AG04450 (cell line): ENCODE measurements at regions of chr15 and their contacts with region 1.

Region 1: DNA sequence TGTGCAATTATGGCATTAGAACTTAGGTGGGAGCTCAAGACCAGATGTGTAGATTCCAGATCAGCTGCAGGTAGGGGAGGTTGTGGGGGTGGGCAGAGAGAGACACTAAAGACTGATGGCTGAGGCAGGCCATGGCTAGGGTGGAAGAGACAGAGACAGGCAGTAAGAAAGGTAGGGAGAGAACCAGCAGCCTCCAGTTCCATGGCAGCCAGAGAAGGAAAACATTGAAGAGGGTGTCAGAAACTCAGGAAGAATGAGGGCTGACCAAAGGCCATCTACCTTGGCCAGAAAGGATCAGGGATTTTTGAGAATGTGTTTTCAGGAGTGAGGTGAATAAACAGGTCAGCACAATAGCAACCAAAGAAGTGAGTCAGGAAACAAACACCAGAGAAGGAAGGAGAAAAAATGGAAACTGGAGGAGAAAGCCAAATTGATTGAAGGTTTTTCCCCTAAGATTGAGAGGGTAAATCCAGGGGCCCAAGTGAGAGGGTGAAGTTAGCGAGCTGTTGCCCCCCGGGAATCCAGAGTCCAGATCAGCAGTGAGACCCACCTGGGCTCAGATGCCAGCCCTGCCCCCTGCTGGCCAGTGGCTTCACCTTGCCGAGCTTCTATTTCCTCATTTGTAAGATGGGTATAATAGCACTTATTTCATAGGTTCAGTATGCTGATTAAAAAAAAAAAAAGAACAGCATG is 41.0 kb downstream of the ABHD2 start:
- DNase-seq: no peak
- H3K4me3 ChIP-seq: no peak overlapping the region
- H3K27ac ChIP-seq: no peak overlapping the region
- H3K27me3 ChIP-seq: no peaks in the 10 kb centered on the region
- CTCF ChIP-seq: peak; percentile 73

Region 2: GRCh38 chr15:88476635-88477060 is 652.6 kb before region 1 on chr15:
- CTCF ChIA-PET with region 1: no interaction called
- POLR2A ChIA-PET with region 1: no interaction called
- DNase-seq: peak; percentile 23
- H3K4me3 ChIP-seq: no peak overlapping the region
- H3K27ac ChIP-seq: no peak overlapping the region
- H3K27me3 ChIP-seq: no peaks in the 10 kb centered on the region
- CTCF ChIP-seq: peak; percentile 66

Region 3: DNA sequence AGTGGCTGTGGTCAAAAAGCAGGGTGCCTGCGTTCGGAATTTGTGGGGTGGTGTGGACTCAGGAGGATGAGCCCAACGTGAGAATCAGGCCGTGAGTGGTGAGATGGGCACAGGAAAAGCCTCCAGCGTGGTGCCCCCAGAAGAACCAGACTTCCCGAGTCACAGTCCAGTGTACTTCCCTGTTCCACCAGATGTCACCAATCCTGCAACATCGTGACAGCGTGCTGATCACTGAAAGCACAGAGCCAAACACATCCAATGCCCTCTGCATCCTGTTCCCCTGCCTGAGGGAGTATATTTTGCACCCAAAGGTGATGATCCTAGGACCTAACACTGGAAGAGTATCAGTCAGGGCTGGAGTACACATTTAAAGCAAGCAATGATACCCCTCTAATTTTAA is 346.8 kb before region 1 on chr15:
- CTCF ChIA-PET with region 1: no interaction called
- POLR2A ChIA-PET with region 1: no interaction called
- DNase-seq: no peak
- H3K4me3 ChIP-seq: no peak overlapping the region
- H3K27ac ChIP-seq: no peak overlapping the region
- H3K27me3 ChIP-seq: peaks cover 7% of the 10 kb centered on the region
- CTCF ChIP-seq: no peak

Region 4: GRCh38 chr15:89030311-89030710 is 99.0 kb before region 1 on chr15:
- CTCF ChIA-PET with region 1: no interaction called
- POLR2A ChIA-PET with region 1: no interaction called
- DNase-seq: no peak
- H3K4me3 ChIP-seq: no peak overlapping the region
- H3K27ac ChIP-seq: no peak overlapping the region
- H3K27me3 ChIP-seq: no peaks in the 10 kb centered on the region
- CTCF ChIP-seq: no peak

Region 5: GRCh38 chr15:89101302-89102191 is 27.7 kb before region 1 on chr15:
- CTCF ChIA-PET with region 1: interaction called, 26 read pairs
- POLR2A ChIA-PET with region 1: no interaction called
- DNase-seq: peak; percentile 97
- H3K4me3 ChIP-seq: no peak overlapping the region
- H3K27ac ChIP-seq: peak overlapping the region; percentile 97
- H3K27me3 ChIP-seq: no peaks in the 10 kb centered on the region
- CTCF ChIP-seq: no peak

Region 6: DNA sequence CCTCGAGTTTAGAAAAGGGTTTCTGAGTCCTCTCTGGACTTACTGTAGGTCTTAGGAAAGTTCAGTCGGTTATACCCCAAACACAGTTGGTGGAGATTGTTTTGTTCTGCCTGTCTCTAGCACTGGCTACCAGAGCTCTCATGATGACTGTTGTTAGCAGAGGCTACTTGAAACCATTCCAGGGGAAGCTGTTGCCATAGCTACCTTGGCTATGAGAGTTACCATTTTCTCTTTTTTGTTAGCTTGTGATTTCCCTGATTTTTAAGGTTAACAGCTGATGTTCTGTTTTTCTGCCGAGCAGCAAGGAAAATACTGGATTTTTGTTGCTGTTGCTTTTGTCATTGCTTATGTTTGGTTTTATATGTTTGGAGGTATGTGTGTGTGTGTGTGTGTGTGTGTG is 14.3 kb before region 1 on chr15:
- CTCF ChIA-PET with region 1: interaction called, 17 read pairs
- POLR2A ChIA-PET with region 1: no interaction called
- DNase-seq: peak; percentile 38
- H3K4me3 ChIP-seq: no peak overlapping the region
- H3K27ac ChIP-seq: no peak overlapping the region
- H3K27me3 ChIP-seq: no peaks in the 10 kb centered on the region
- CTCF ChIP-seq: no peak

Region 7: DNA sequence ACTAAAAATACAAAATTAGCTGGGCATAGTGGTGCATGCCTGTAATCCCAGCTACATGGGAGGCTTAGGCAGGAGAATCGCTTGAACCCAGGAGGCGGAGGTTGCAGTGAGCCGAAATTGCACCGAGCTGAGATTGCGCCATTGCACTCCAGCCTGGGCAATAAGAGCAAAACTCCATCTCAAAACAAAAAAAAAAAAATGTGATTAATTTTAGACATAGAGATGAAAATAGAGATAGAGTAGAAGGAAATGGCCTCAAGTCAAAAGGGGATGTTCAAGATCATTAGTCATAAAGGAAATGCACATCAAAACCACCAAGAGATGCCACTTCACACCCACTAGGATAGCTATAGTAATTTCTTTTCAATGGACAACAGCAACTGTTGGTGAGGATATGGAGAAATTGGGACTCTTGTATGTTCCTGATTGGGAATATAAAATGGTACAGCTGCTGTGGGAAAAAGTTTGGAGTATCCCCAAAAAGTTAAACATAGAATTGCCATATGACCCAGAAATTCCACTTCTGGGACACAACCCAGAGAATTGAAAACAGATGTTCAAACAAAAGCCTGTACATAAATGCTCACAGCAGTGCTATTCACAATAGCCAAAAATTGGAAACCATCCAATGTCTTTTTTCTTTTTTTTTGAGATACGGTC is 14.4 kb after region 1 on chr15:
- CTCF ChIA-PET with region 1: interaction called, 15 read pairs
- POLR2A ChIA-PET with region 1: no interaction called
- DNase-seq: peak; percentile 75
- H3K4me3 ChIP-seq: no peak overlapping the region
- H3K27ac ChIP-seq: peak overlapping the region; percentile 11
- H3K27me3 ChIP-seq: no peaks in the 10 kb centered on the region
- CTCF ChIP-seq: no peak